PC-9 (cell line): ENCODE measurements at regions of chr19 and their contacts with region 1.

Region 1: GRCh38 chr19:18846862-18847548 is 15.2 kb downstream of the UPF1 start:
- DNase-seq: peak in 1 of 2 experiments; percentile 66
- H3K4me3 ChIP-seq: no peak overlapping the region
- H3K27ac ChIP-seq: no peak overlapping the region
- H3K4me1 ChIP-seq: no peaks in the 10 kb centered on the region
- H3K27me3 ChIP-seq: no peaks in the 10 kb centered on the region
- CTCF ChIP-seq: peak; percentile 93

Region 2: GRCh38 chr19:18469069-18469846 is 377.7 kb before region 1 on chr19:
- CTCF ChIA-PET with region 1: interaction called, 4 read pairs
- POLR2A ChIA-PET with region 1: no interaction called
- intact Hi-C with region 1: loop called (anchors 10 kb)
- DNase-seq: no peak
- H3K4me3 ChIP-seq: no peak overlapping the region
- H3K27ac ChIP-seq: no peak overlapping the region
- H3K4me1 ChIP-seq: 0 out of 2 replicates have a peak, but pooled peaks cover 5% of the 10 kb centered on the region
- H3K27me3 ChIP-seq: no peaks in the 10 kb centered on the region
- CTCF ChIP-seq: peak; percentile 75

Region 3: DNA sequence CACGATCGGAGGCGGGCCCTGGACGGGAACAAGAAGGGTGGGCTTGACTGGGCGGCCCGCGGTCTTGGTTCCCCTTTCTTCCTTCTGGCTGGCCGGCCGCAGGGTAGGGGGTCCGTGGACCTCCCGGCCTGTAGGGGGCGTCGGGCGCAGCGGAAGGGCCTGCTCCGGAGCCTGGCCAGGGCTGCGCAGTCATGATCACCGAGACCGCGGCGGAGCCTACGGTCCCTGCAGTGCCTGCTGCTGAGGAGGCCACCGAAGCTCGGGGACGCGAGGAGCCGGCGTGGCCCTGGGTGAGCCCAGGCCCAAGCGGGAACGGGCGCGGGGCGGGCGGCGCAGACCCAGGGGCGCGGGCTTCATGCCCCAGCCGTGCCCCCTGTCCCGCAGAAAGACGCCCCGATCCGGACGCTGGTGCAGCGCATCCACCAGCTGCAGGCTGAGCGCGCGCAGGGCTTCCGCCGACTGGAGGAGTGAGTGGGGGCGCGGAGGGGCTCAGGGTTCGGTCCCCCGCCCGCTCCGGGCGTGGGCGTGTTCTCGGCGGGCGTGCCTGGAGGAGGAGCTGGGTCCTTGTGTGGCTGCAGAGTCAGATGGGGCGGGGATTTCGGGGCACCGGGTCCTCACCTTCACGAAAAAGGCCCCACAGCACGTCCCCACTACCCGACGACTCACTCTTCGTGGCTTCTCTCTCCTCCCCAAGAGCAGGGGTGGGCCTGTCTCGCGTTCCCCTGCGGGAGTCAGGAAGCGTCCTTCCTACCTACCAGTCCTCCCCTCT is 258.2 kb before region 1 on chr19 and contains the start of gene REX1BD:
- CTCF ChIA-PET with region 1: interaction called, 6 read pairs
- POLR2A ChIA-PET with region 1: no interaction called
- intact Hi-C with region 1: loop called (anchors 5 kb)
- DNase-seq: peak; percentile 66 to 81
- H3K4me3 ChIP-seq: peak within 1 kb of the TSS; percentile 79
- H3K27ac ChIP-seq: peak within 1 kb of the TSS; percentile 64
- H3K4me1 ChIP-seq: peaks cover 11% of the 10 kb centered on the region
- H3K27me3 ChIP-seq: no peaks in the 10 kb centered on the region
- CTCF ChIP-seq: peak; percentile 92
- total RNA-seq, gene REX1BD: 44.8 and 64.3 TPM in 2 replicates

Region 4: GRCh38 chr19:18610556-18611326 is 236.3 kb before region 1 on chr19:
- CTCF ChIA-PET with region 1: interaction called, 13 read pairs
- POLR2A ChIA-PET with region 1: no interaction called
- intact Hi-C with region 1: no loop called
- DNase-seq: no peak
- H3K4me3 ChIP-seq: peak overlapping the region; percentile 34; the same call in 1 of the 2 replicates
- H3K27ac ChIP-seq: no peak overlapping the region
- H3K4me1 ChIP-seq: peaks cover 26% of the 10 kb centered on the region
- H3K27me3 ChIP-seq: peaks cover 90% of the 10 kb centered on the region
- CTCF ChIP-seq: no peak

Region 5: GRCh38 chr19:18697680-18698079 is 149.3 kb before region 1 on chr19:
- CTCF ChIA-PET with region 1: interaction called, 25 read pairs
- POLR2A ChIA-PET with region 1: no interaction called
- intact Hi-C with region 1: no loop called
- DNase-seq: no peak
- H3K4me3 ChIP-seq: no peak overlapping the region
- H3K27ac ChIP-seq: no peak overlapping the region
- H3K4me1 ChIP-seq: peaks cover 12% of the 10 kb centered on the region; the same call in 1 of the 2 replicates
- H3K27me3 ChIP-seq: no peaks in the 10 kb centered on the region
- CTCF ChIP-seq: no peak